ENCODE measurements at regions of chr1 and their contacts with region 1.

Region 1: GRCh38 chr1:167220537-167221125 is at the start of gene POU2F1:
- DNase-seq: peak; percentile 92 to 98
- H3K4me3 ChIP-seq: peak within 1 kb of the TSS; percentile 70
- H3K27ac ChIP-seq: peak within 1 kb of the TSS; percentile 92
- H3K4me1 ChIP-seq: peaks cover 34% of the 10 kb centered on the region
- H3K27me3 ChIP-seq: no peaks in the 10 kb centered on the region
- CTCF ChIP-seq: peak; percentile 76
- total RNA-seq, gene POU2F1: 16.6 and 28.5 TPM in 2 replicates

Region 2: DNA sequence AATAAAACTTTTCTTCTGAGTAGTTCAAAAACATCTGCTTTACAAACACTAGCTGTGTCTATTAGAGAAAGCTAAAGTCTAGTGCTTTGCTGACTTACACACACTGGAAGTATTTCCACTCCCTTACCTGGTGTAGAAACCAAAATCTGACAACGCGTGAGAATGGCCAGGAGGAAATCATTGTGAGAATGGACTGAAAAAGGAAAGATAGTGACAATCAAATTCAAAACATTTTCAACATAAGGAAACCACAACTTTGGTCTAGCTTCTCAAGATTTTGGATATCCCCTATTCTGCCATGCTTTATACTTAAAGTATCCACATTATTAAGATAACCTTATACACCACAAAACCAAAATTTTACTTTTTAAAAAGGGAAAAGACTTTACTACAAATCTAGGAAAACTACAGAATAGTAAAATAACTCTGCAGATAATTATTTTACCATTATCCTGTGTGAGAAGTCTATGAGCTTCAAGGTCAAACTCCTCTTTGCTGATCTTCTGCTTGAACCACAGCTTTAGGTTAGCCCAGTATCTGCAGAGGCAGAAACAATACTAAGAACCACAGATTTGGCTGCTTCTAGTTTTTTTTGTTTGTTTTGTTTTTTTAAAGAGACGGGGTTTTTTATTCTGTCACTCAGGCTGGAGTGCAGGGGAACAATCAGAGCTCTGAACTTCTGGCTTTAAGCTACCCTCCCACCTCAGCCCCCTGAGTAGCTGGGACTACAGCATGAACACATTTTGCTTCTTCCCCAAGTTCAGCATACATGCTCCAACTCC is 351.1 kb before region 1 on chr1:
- CTCF ChIA-PET with region 1: no interaction called
- POLR2A ChIA-PET with region 1: no interaction called
- intact Hi-C with region 1: loop called (anchors 5 kb)
- DNase-seq: no peak
- H3K4me3 ChIP-seq: no peak overlapping the region
- H3K27ac ChIP-seq: no peak overlapping the region
- H3K4me1 ChIP-seq: peaks cover 4% of the 10 kb centered on the region; the same call in 1 of the 2 replicates
- H3K27me3 ChIP-seq: no peaks in the 10 kb centered on the region
- CTCF ChIP-seq: no peak

Region 3: DNA sequence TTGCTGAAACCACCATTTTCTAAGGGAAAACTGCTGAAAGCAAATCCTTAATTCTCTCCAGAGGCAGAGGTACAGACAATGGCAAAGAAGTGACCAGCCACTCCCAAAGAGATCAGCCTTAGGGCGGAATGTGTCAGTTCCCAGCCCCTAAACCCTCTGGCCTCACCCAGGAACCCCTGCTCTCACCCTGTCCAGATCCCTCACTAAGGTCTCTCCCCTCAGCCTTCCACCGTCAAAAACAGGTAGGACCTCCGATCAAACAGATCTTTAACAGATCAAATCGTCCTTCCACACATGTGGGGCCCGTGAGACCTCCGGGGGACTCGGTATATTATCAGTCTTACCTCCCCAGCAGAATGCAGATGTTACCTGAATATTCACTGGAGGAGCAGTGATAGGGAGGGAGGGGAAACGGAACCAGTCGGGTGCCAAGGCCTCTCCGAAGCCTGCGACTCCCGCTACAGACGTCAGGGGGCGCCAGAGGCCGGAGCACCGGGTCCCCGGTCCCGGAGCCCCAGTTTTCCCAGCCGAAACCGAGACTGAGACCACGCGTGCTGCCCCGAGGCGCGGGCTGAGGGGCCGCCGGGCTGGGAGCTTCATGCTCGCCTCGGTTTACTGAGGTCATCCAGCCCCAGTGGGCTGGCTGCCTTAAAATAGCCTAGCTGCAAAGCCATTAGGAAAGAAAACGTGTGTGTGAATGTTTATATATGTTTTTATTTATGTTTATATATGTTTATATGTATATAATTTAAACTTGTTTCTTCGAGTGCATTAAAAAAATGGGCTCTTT is 154.1 kb before region 1 on chr1:
- CTCF ChIA-PET with region 1: interaction called, 10 read pairs
- POLR2A ChIA-PET with region 1: interaction called, 17 read pairs
- intact Hi-C with region 1: loop called (anchors 1 kb)
- DNase-seq: peak; percentile 42 to 82
- H3K4me3 ChIP-seq: peak overlapping the region; percentile 55; the same call in 1 of the 2 replicates
- H3K27ac ChIP-seq: 0 out of 2 replicates have a peak overlapping the region, but pooled peaks have one; percentile 27
- H3K4me1 ChIP-seq: no peaks in the 10 kb centered on the region
- H3K27me3 ChIP-seq: no peaks in the 10 kb centered on the region
- CTCF ChIP-seq: peak; percentile 99

Region 4: DNA sequence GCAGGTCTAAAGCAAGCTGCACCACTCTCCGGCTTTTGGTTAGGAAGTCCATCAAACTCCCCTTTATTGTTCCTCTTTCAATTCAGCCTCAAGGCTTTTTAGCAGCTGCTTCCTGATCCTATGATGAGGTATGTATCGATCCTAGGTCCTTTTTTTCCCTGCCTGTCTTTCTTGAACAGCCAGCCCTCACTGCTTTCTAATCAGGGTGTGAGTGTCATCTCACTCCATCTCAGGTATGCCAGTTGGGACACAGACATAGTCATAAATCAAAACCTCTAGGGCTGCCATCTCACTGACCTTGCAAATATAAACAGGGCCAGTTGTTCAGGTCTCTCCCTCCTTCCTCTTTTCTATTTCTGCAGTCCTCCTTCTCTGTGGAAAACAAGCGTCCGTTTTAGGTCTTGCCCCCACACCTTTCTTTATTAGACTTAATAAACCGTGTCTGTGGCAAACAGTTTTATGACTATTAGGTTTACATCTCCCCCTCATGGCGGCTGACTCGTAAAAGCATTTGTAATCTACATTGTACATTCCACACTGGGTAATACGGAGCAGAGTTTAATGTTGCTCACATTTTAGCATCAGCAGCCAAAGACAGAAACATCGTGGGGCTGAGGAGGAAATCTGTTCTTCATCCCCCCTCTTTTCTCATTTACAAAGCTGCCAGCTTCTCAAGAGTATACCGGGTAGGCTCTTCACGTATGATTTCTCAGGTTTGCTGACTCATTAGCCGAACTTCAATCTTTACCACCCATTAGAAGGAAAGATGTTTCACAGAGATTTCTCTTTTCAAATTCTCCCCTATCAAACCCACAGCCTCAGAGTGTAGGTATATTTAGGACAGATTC is 115.1 kb before region 1 on chr1:
- CTCF ChIA-PET with region 1: interaction called, 12 read pairs
- POLR2A ChIA-PET with region 1: interaction called, 11 read pairs
- intact Hi-C with region 1: no loop called
- DNase-seq: peak in 1 of 2 experiments; percentile 68
- H3K4me3 ChIP-seq: no peak overlapping the region
- H3K27ac ChIP-seq: 0 out of 2 replicates have a peak overlapping the region, but pooled peaks have one; percentile 2
- H3K4me1 ChIP-seq: peaks cover 75% of the 10 kb centered on the region
- H3K27me3 ChIP-seq: no peaks in the 10 kb centered on the region
- CTCF ChIP-seq: no peak

Region 5: GRCh38 chr1:167165948-167166689 is 54.5 kb before region 1 on chr1:
- CTCF ChIA-PET with region 1: interaction called, 11 read pairs
- POLR2A ChIA-PET with region 1: interaction called, 15 read pairs
- intact Hi-C with region 1: loop called (anchors 1 kb)
- DNase-seq: no peak
- H3K4me3 ChIP-seq: no peak overlapping the region
- H3K27ac ChIP-seq: no peak overlapping the region
- H3K4me1 ChIP-seq: peaks cover 51% of the 10 kb centered on the region
- H3K27me3 ChIP-seq: no peaks in the 10 kb centered on the region
- CTCF ChIP-seq: no peak

Region 6: GRCh38 chr1:167291539-167292185 is 71.0 kb after region 1 on chr1:
- CTCF ChIA-PET with region 1: no interaction called
- POLR2A ChIA-PET with region 1: interaction called, 10 read pairs
- intact Hi-C with region 1: no loop called
- DNase-seq: no peak
- H3K4me3 ChIP-seq: no peak overlapping the region
- H3K27ac ChIP-seq: no peak overlapping the region
- H3K4me1 ChIP-seq: peaks cover 4% of the 10 kb centered on the region
- H3K27me3 ChIP-seq: no peaks in the 10 kb centered on the region
- CTCF ChIP-seq: no peak

Region 7: GRCh38 chr1:167510244-167510643 is 289.6 kb after region 1 on chr1:
- CTCF ChIA-PET with region 1: no interaction called
- POLR2A ChIA-PET with region 1: no interaction called
- intact Hi-C with region 1: no loop called
- DNase-seq: no peak
- H3K4me3 ChIP-seq: no peak overlapping the region
- H3K27ac ChIP-seq: no peak overlapping the region
- H3K4me1 ChIP-seq: no peaks in the 10 kb centered on the region
- H3K27me3 ChIP-seq: no peaks in the 10 kb centered on the region
- CTCF ChIP-seq: no peak

Region 8: DNA sequence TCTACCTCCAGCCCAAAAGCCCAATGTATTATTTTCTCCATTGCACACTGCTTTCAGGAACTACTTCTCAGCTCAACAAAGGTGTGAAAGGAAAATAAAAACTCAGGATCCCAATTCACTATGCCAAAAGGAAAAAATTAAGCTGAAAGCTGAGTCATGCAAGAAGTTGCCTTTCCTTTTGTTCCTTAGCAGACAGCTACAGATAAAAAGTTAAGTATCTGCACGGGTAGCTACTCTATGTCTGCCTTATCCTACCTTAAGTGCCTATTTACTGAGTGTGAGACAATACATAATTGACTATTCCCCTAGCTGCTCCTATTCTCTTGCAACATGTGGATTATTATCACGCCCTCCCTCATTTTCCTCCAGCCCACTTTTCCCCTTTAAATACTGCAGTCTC is 609.2 kb after region 1 on chr1:
- CTCF ChIA-PET with region 1: interaction called, 12 read pairs
- POLR2A ChIA-PET with region 1: no interaction called
- intact Hi-C with region 1: no loop called
- DNase-seq: no peak
- H3K4me3 ChIP-seq: no peak overlapping the region
- H3K27ac ChIP-seq: no peak overlapping the region
- H3K4me1 ChIP-seq: peaks cover 18% of the 10 kb centered on the region
- H3K27me3 ChIP-seq: no peaks in the 10 kb centered on the region
- CTCF ChIP-seq: no peak